GM10248 (cell line): ENCODE measurements at regions of chr6 and their contacts with region 1.

Region 1: DNA sequence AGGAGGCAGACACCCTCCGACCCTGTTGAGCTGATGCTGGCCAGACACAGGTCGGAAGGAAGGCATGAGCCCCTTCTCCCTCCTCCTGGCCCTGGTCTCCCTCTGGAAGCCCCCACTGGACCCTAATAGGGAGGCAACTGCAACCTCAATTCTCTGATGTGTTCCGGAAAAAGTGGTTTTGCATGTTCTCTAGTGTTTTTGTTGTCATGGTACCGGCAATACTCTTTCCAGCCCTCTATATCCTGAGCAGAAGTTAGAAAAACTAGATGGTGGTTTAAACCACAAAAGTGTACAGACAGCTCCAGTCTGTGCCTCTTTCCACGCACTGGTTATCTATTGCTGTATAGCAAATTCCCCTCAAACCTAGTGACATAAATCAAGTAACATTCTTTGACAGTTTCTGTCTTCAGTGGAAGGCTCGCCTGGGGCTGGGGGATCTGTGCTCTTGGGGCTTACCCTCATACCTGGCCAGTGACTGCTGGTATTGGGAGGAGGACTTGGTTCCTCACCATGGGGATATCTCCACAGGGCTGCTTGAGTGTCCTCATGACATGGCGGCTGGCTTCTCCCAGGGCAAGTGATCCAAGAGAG is 37.0 kb downstream of the SYTL3 start:
- DNase-seq: peak; percentile 46
- CTCF ChIP-seq: no peak

Region 2: DNA sequence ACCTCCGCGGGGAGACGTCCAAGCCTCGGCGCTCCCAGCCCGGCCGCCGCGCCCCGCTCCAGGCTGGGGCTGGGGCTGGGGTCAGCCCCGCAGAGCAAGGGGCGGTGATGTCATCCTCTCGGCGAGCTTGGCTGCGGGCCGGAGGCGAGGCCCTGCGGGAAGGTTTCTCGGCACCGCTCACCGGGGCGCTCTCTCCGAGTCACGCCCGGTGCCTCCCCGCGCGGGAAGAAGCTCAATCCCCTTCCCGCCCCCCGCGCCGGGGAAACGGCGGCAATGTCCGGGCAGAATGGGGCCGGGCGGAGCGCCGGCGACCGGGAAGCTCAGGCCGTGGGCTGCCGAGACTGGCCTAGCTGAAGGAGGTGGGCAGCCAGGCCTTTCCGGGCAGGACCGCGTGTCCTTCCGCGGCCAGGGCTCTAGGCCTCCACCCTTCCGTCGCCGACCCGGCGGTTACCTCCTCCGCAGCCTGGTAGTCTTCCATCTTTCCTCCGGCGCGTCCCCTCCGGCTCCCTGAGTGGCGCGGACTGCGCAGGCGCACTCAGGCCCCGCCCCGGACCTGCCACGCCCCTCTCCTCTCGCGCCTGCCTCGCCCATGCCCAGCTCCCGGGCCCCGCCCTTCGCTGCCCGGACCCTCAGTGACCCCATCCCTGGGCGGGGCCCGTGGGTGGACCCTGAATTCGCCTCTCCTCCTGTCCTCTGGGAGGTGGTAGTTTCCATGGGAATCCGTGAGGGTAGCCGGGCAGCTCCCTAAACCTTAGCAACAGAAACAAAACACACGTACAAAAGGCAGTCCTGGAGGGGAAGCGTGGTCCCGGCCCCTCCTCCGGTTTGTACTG is 42.4 kb before region 1 on chr6 and contains the start of gene DYNLT1:
- CTCF ChIA-PET with region 1: interaction called, 22 read pairs
- POLR2A ChIA-PET with region 1: no interaction called
- DNase-seq: peak; percentile 94
- CTCF ChIP-seq: no peak

Region 3: DNA sequence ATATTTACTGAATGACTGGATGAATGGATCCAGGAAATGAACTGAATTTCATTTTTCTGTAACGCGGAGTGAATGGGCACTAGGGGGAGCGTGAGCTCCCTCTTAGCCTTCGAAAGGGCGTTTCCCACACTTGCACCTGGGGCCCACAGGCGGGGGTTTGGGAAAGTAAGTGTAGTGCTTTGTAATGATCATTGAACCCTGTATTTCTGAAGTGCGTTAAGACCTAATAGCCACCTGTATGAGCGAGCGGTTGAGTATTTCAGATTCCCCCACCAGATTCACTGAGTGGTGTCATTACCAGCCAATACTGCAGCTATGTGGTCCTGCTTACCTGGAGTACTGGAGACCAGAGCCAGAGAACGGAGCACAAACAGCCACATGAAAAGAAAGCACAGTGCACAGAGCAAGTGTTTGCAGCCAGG is 26.5 kb before region 1 on chr6:
- CTCF ChIA-PET with region 1: interaction called, 30 read pairs
- POLR2A ChIA-PET with region 1: no interaction called
- DNase-seq: peak; percentile 65
- CTCF ChIP-seq: peak; percentile 58

Region 4: DNA sequence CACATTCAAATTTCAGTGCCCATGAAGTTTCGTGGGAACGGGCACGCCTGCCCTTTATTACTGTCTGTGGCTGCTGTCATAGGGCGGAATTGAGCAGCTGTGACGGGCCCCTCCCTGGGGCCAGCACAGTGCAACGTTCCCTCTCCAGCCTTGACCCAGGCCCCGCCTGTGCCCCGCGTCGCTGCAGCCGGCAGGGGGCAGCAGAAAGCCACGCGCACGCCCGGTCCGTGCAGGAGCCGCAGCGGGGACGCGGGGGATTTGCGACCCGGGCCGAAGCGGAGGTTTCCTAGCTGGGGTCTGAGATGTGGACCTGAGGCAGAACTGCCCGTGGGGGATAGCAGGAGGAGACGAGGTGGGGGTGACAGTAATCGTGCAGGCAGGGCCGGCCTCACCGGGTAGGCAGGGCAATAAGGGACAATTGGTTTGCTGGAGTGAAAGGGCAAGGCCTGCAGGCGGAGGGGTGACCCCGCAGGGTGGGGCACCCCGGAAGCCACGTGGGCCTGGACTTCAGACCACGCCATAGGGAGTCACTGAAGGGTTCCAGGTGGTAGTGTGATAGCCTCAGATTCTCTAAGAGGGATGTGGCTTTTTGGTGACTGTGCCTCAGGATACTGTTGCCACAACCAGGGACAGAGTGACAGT is 17.4 kb after region 1 on chr6:
- CTCF ChIA-PET with region 1: interaction called, 56 read pairs
- POLR2A ChIA-PET with region 1: no interaction called
- DNase-seq: peak; percentile 91
- CTCF ChIP-seq: peak; percentile 99

Region 5: DNA sequence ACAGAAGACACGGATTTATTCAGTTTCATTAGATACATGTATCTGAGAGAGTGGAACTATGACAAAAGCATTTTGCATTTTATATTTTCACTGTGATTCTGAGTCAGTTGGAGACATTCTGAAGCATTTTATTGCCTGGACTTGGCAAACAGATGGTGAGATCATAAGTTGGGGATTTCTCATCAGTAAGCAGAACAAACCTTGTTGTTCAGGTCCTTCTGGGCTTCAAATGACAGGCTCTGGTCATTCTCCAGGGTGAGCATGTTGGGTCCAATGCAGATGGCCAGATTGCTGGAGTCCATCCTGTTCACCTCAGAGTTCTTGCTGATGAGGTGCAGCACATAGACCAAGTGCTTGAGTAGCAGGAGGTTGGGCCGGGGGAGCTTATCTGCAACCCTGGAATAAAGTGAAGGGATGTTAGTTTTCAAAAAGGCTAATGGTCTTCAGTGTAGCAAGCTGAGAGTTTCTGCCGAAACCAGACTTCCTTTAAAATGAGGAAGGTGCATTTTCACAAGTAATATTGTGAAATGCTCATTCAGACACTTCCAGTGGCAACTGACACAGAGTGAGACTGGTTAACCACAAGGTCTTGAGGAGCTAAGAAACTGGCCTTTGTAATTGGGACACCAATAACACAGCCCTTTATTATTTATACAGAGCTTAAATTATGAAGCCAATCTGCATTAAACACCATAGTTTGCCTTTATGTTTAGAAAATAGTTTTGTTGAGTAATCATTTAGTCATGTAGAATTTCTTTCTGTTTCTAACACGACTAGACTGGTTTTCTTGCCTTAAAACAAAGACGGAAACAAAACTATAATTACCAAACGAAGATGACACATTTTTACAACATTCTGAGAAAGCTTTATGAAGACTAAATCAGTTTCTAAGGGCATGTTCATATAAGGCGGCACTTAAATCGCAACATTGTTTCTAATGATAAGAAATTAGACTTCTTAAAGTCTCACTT is 352.3 kb after region 1 on chr6:
- CTCF ChIA-PET with region 1: no interaction called
- POLR2A ChIA-PET with region 1: no interaction called
- DNase-seq: peak; percentile 70
- CTCF ChIP-seq: no peak